Activated CD4-positive, alpha-beta T cell treated with anti-CD3 and anti-CD28 coated beads, Interleukin-2, amount 10 ng/mL, durations not matched to agents 7 days and 5 days (primary cell): ENCODE measurements at regions of chr17 and their contacts with region 1.

Region 1: DNA sequence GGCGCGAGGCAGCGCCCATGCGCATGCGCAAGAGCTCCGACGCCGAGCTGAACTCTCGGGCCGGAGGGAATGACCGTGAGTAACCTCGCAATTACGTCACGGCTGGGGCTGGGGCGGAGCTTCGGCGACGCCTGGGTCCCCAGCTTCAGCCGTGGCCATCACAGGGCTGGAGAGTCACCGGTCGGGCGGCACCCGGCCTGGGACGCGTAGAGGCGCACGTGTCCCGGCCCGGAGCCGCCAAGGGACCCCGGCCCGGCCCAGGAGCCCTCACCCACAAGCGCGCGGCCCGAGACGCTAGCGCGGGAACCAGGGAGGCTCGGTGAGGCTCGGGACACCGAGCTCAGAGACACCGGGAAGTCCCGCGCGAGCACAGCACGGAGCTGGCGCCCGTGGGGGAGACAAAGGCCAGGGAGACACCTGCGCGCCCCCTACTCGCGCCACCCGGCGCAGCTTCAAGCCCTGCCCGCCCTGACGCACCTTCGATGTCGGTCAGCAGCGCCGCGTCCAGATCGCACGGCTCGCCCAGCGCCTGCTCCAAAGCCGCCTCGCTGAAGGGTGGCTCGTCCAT is 452 bp downstream of the SREBF1 start:
- DNase-seq: peak; percentile 96
- H3K4me3 Mint-ChIP-seq: peak overlapping the region; percentile 87
- H3K27ac Mint-ChIP-seq: peak overlapping the region; percentile 89
- H3K4me1 Mint-ChIP-seq: peaks cover 77% of the 10 kb centered on the region
- H3K27me3 Mint-ChIP-seq: no peaks in the 10 kb centered on the region

Region 2: DNA sequence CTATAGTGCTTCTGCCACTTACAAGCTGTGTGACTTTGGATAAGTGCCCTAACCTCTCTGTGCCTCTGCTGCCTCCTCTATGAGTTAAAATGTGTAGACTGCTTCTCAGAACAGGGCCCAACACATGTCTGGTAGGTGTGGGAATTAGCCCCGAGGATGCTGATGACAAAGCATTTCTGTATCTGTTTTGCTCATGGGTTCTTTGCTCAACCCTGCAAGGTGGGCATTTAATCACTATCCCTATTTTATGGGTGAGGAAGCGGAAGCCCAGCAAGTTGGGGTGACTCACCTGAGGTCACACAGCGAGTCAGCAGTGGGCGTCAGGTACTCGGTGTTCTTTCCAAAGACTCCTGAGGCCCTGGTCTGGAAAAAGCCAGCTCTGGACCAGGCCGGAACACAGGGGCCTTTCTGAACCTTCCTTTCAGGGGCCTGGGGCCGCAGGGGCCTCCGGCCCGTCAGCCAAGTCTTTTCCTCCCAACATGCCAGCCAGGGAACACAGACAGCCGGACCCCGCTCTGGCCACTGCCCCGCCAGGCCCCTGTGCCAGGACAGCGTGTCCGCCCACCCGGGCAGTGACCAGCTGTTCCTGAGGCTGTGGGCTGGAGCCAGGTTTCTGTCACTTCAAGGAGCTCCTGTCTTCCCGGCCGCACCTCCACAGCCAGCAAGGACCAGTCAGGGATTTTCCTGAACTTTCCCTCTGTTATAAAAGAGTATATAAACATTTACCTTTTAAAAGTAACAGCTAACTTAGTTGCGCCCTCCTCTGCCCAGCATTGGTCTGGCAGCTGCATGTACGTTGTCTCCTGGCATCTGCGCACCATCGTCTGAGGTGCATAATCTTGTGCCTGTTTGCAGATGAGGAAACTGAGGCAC is 62.1 kb before region 1 on chr17:
- CTCF ChIA-PET with region 1: no interaction called
- POLR2A ChIA-PET with region 1: no interaction called
- DNase-seq: no peak
- H3K4me3 Mint-ChIP-seq: no peak overlapping the region
- H3K27ac Mint-ChIP-seq: no peak overlapping the region
- H3K4me1 Mint-ChIP-seq: peaks cover 5% of the 10 kb centered on the region
- H3K27me3 Mint-ChIP-seq: no peaks in the 10 kb centered on the region

Region 3: DNA sequence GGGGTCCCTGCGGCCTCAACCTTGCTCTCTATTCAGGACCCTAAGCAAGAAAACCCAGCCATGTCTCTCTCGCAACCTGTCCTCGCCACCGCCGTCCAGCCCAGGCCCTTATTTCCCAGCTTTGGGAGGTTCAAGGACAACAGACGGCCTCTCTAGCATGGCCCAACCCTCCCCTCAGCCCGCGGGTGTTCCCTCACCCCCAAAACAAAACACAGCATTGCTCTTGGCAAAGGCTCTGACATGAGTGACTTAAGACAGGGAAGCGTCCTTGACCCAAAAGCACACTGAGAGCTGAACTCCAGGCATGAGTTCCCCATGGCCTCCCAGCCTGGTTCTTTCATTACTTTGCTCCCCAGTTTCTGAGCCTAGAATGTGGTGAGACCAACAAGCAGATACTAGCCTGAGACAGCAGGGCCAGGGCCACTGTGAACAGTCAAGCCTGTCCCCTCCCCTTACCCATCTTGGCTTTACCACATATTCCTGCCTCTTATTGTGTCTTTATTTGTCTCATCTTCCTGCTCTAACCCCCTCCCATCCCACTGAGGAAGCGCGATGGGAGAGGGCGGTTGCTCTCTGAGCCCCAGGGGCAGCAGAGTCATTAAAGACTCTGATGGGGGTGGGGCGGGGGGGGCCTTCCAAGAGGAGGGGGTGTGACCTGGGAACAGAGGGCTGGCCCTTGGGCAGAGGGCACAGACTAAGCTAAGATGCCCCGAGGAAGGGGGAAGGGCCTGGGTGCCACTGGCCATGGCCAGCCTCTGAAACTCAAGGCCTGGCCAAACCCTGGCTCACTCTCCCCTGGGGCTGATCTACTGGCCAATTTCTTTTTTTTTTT is 11.3 kb before region 1 on chr17:
- CTCF ChIA-PET with region 1: interaction called, 15 read pairs
- POLR2A ChIA-PET with region 1: interaction called, 9 read pairs
- DNase-seq: no peak
- H3K4me3 Mint-ChIP-seq: peak overlapping the region; percentile 69
- H3K27ac Mint-ChIP-seq: peak overlapping the region; percentile 93
- H3K4me1 Mint-ChIP-seq: peaks cover 82% of the 10 kb centered on the region
- H3K27me3 Mint-ChIP-seq: no peaks in the 10 kb centered on the region

Region 4: DNA sequence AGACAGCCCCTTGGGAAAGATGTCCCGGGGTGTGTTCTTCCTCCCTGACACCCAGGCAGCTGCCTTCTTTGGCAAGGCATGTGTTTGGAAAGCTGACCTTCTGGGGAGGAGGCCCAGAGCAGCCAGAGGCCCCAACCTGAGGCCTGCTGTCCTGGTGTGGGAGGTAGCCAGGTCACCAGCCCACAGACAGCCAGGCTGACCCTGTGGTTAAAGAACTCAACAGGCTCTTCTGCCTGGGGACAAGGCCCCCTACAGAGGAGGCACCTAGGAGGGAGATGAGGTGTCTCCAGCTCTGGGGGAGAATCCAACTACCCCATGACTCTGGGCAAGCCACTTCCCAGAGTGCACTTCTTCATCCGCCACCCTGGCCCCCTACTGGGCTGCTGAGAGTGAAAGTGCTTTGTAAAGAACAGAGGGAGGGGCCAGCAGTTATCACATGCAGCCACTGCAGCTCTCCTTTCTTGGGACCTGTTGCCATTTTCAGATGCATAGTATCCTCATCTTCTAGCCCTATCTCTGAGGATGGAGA is 13.6 kb after region 1 on chr17:
- CTCF ChIA-PET with region 1: interaction called, 32 read pairs
- POLR2A ChIA-PET with region 1: interaction called, 7 read pairs
- DNase-seq: peak; percentile 81
- H3K4me3 Mint-ChIP-seq: peak overlapping the region; percentile 22
- H3K27ac Mint-ChIP-seq: peak overlapping the region; percentile 96
- H3K4me1 Mint-ChIP-seq: peaks cover 81% of the 10 kb centered on the region
- H3K27me3 Mint-ChIP-seq: no peaks in the 10 kb centered on the region